GM12878 (cell line): ENCODE measurements at regions of chr10 and their contacts with region 1.

Region 1: DNA sequence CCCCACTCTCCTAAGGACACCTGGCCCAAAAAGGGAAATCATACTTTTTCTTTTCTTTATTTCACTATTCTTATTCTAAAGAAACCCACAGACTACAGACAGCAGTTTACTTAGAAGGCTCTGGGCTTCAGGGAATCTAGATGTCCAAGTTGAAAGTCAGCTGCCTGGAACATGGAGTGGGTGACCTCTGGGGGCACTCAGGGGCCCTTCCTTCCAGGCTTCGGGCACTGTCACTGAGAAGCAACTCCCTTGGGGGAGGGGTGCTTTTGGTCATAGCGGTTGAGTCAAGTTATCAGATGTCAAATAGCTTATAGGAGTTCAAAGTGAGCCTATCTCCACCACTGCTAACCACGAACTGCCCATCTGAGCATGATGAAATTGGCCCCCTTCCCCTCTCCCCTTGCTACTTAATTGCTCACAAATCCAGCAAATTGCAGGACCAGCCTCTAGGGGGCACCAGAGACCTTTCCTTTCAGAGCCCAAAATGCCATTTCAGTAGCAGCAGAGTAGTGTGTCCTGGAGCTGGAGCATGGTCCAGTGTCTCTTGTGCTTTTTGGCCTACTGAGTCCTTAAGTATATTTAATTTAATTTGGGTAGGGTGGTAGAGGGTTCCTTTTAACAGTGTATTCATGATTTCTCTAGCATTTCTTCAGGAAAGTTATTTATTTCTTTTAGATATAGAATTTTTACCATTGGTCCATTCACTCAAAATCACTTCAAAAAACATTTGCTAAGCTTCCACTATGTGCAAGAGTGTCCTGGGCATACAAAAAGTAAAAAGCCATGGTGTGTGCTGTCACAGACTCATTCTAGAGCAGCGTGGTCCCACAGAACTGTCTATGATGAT is 463.8 kb downstream of the KCNMA1 start:
- DNase-seq: peak; percentile 28
- ATAC-seq: peak; percentile 84
- H3K4me3 ChIP-seq: no peak overlapping the region
- H3K27ac ChIP-seq: no peak overlapping the region
- H3K4me1 ChIP-seq: no peaks in the 10 kb centered on the region
- H3K27me3 ChIP-seq: no peaks in the 10 kb centered on the region
- CTCF ChIP-seq: peak; percentile 80 to 96 (median 81); a peak in 5 of 6 replicates
- EP300 ChIP-seq: no peak
- POLR2A ChIP-seq: no peak
- RAD21 ChIP-seq: peak; percentile 96

Region 2: DNA sequence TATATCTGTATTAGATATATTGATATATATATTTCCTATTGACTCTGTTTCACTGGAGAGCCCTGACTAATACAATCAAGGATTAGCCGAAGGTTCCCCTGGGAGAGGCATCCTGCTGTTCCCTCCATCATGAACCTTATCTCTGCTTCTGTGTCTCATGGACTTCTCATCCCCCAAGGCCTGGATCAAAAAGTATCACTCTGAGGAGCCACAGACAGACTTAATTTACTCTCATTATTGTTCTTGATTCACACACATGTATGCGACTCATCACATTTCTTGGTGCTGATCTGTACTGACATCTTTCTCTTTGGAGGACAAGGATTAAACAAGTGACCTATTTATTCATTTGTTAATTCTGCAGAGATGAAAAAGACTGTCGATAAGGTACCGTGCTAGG is 86.5 kb before region 1 on chr10:
- CTCF ChIA-PET with region 1: no interaction called
- POLR2A ChIA-PET with region 1: no interaction called
- RAD21 ChIA-PET with region 1: no interaction called
- SMC1A ChIA-PET with region 1: no interaction called
- in situ Hi-C with region 1: no loop called
- intact Hi-C with region 1: no loop called
- DNase-seq: no peak
- ATAC-seq: no peak
- H3K4me3 ChIP-seq: no peak overlapping the region
- H3K27ac ChIP-seq: no peak overlapping the region
- H3K4me1 ChIP-seq: no peaks in the 10 kb centered on the region
- H3K27me3 ChIP-seq: no peaks in the 10 kb centered on the region
- CTCF ChIP-seq: no peak
- EP300 ChIP-seq: no peak
- POLR2A ChIP-seq: no peak
- RAD21 ChIP-seq: no peak

Region 3: GRCh38 chr10:77195101-77195500 is 21.3 kb after region 1 on chr10:
- CTCF ChIA-PET with region 1: interaction called, 20 read pairs
- POLR2A ChIA-PET with region 1: no interaction called
- RAD21 ChIA-PET with region 1: interaction called, 4 read pairs
- SMC1A ChIA-PET with region 1: interaction called, 5 read pairs
- in situ Hi-C with region 1: no loop called
- intact Hi-C with region 1: no loop called
- DNase-seq: no peak
- ATAC-seq: no peak
- H3K4me3 ChIP-seq: no peak overlapping the region
- H3K27ac ChIP-seq: no peak overlapping the region
- H3K4me1 ChIP-seq: no peaks in the 10 kb centered on the region; the same call in 1 of the 2 replicates
- H3K27me3 ChIP-seq: peaks cover 0 to 2% of the 10 kb centered on the region in 2 experiments; a peak in 1 of 4 replicates
- CTCF ChIP-seq: no peak
- EP300 ChIP-seq: no peak
- POLR2A ChIP-seq: no peak
- RAD21 ChIP-seq: no peak

Region 4: DNA sequence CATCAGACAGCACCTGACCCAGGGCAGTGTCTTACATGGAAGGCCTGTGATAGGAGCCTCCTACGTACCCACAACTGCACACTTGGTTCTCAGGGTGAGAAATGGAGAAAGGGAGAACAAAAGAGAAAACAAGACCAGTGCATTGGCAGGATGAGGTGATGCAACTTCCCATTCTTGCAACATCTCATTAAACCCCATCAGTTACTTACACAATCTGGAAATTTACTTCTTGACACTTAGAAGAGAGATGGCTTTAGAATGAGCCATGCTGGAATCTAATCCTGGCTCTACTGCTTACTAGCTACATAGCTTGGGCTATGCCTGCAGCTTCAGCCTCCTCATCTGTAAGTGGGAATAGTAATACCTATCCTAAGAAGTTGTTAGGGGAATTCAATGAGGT is 72.1 kb after region 1 on chr10:
- CTCF ChIA-PET with region 1: interaction called, 66 read pairs
- POLR2A ChIA-PET with region 1: interaction called, 6 read pairs
- RAD21 ChIA-PET with region 1: interaction called, 44 read pairs
- SMC1A ChIA-PET with region 1: interaction called, 106 read pairs
- in situ Hi-C with region 1: no loop called
- intact Hi-C with region 1: loop called (anchors 2 kb)
- DNase-seq: no peak
- ATAC-seq: no peak
- H3K4me3 ChIP-seq: no peak overlapping the region
- H3K27ac ChIP-seq: no peak overlapping the region
- H3K4me1 ChIP-seq: no peaks in the 10 kb centered on the region
- H3K27me3 ChIP-seq: no peaks in the 10 kb centered on the region
- CTCF ChIP-seq: no peak
- EP300 ChIP-seq: no peak
- POLR2A ChIP-seq: no peak
- RAD21 ChIP-seq: no peak

Region 5: GRCh38 chr10:77377678-77378352 is 204.0 kb after region 1 on chr10:
- CTCF ChIA-PET with region 1: interaction called, 10 read pairs
- POLR2A ChIA-PET with region 1: no interaction called
- RAD21 ChIA-PET with region 1: interaction called, 3 read pairs
- SMC1A ChIA-PET with region 1: interaction called, 3 read pairs
- in situ Hi-C with region 1: no loop called
- intact Hi-C with region 1: no loop called
- DNase-seq: no peak
- ATAC-seq: peak; percentile 55
- H3K4me3 ChIP-seq: no peak overlapping the region
- H3K27ac ChIP-seq: no peak overlapping the region
- H3K4me1 ChIP-seq: no peaks in the 10 kb centered on the region
- H3K27me3 ChIP-seq: no peaks in the 10 kb centered on the region
- CTCF ChIP-seq: peak in 1 of 3 experiments; percentile 29; a peak in 1 of 6 replicates
- EP300 ChIP-seq: no peak
- POLR2A ChIP-seq: no peak
- RAD21 ChIP-seq: peak; percentile 38; the same call in 1 of the 2 replicates

Region 6: GRCh38 chr10:77428691-77429395 is 255.0 kb after region 1 on chr10:
- CTCF ChIA-PET with region 1: interaction called, 11 read pairs
- POLR2A ChIA-PET with region 1: no interaction called
- RAD21 ChIA-PET with region 1: no interaction called
- SMC1A ChIA-PET with region 1: interaction called, 5 read pairs
- in situ Hi-C with region 1: no loop called
- intact Hi-C with region 1: no loop called
- DNase-seq: no peak
- ATAC-seq: peak; percentile 66
- H3K4me3 ChIP-seq: no peak overlapping the region
- H3K27ac ChIP-seq: no peak overlapping the region
- H3K4me1 ChIP-seq: no peaks in the 10 kb centered on the region
- H3K27me3 ChIP-seq: no peaks in the 10 kb centered on the region
- CTCF ChIP-seq: peak in 2 of 3 experiments; percentile 28 to 55; a peak in 4 of 6 replicates
- EP300 ChIP-seq: no peak
- POLR2A ChIP-seq: no peak
- RAD21 ChIP-seq: peak; percentile 26; the same call in 1 of the 2 replicates

Region 7: DNA sequence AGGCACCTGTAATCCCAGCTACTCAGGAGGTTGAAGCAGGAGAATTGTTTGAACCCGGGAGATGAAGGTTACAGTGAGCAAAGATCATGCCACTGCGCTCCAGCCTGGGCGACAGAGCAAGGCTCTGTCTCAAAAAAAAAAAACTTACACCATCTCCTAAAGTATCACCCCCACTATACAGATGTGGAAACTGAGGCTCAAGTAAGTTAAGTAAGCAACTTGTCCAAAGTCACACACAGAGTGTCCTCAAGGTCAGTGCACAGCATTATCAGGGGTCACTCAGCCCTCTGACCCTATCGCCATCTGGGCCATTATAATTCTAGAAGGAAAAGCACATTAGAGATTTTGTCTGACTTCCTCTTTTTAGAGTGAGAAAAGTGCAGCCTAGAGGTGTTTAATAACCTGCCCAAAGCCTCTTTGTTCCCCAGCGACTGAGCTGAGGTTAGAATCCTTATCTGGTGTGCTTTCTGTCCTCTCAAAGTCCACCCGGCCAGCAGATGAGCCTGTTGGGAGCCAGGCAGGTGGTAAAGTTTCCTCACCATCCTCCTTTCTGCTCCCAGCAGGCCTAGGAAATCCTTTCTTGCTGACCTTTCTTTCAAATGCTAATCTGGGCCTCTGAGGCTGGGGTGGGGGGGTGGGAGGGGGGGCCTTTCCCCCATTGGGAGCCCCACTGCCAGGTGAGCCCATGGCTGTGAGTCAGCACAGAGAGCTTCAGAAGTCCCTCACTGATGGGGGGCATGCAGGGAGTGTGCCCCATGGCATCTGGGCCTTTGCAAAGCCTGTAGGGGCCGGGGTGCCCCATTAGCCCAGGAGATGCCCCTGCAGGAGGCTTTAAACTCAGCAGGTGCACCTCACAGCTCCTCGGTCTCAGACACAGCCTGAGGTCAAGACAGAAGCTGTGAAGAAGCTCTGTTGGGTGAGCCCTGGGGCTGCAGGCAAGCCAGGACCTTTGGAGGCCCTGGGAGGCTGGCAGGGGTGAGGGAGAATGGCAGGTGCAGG is 475.8 kb after region 1 on chr10:
- CTCF ChIA-PET with region 1: interaction called, 532 read pairs
- POLR2A ChIA-PET with region 1: no interaction called
- RAD21 ChIA-PET with region 1: interaction called, 44 read pairs
- SMC1A ChIA-PET with region 1: interaction called, 113 read pairs
- in situ Hi-C with region 1: loop called (anchors 5 kb)
- intact Hi-C with region 1: loop called (anchors 1 kb)
- DNase-seq: no peak
- ATAC-seq: peak; percentile 81
- H3K4me3 ChIP-seq: no peak overlapping the region
- H3K27ac ChIP-seq: peak overlapping the region; percentile 43; the same call in 1 of the 2 replicates
- H3K4me1 ChIP-seq: peaks cover 24% of the 10 kb centered on the region
- H3K27me3 ChIP-seq: no peaks in the 10 kb centered on the region
- CTCF ChIP-seq: no peak
- EP300 ChIP-seq: no peak
- POLR2A ChIP-seq: no peak
- RAD21 ChIP-seq: no peak